ENCODE measurements at regions of chr9 and their contacts with region 1.

Region 1: GRCh38 chr9:133459476-133460404 is at the start of gene CACFD1:
- DNase-seq: peak; percentile 88 to 94
- ATAC-seq: peak; percentile 84 to 90 (median 85)
- H3K4me3 ChIP-seq: peak within 1 kb of the TSS; percentile 81
- H3K4me3 Mint-ChIP-seq: peak within 1 kb of the TSS; percentile 98
- H3K27ac ChIP-seq: peak within 1 kb of the TSS; percentile 90
- H3K27ac Mint-ChIP-seq: peak within 1 kb of the TSS; percentile 92 to 97
- H3K4me1 ChIP-seq: peaks cover 23% of the 10 kb centered on the region
- H3K4me1 Mint-ChIP-seq: peaks cover 0 to 14% of the 10 kb centered on the region in 2 donors
- H3K27me3 ChIP-seq: no peaks in the 10 kb centered on the region
- H3K27me3 Mint-ChIP-seq: no peaks in the 10 kb centered on the region
- CTCF ChIP-seq: no peak
- total RNA-seq, gene CACFD1: 4.5 to 8.3 (median 5.4) TPM

Region 2: GRCh38 chr9:133478851-133479711 is 19.3 kb after region 1 on chr9 and contains the start of gene SLC2A6:
- intact Hi-C with region 1: loop called (anchors 1 kb)
- DNase-seq: peak; percentile 81 to 90
- ATAC-seq: peak; percentile 96 to 98 (median 97)
- H3K4me3 ChIP-seq: peak within 1 kb of the TSS; percentile 47
- H3K4me3 Mint-ChIP-seq: peak within 1 kb of the TSS; percentile 75
- H3K27ac ChIP-seq: peak within 1 kb of the TSS; percentile 44
- H3K27ac Mint-ChIP-seq: peak within 1 kb of the TSS in 1 of 2 donors; percentile 63
- H3K4me1 ChIP-seq: peaks cover 51% of the 10 kb centered on the region
- H3K4me1 Mint-ChIP-seq: peaks cover 9 to 15% of the 10 kb centered on the region in 2 donors
- H3K27me3 ChIP-seq: no peaks in the 10 kb centered on the region
- H3K27me3 Mint-ChIP-seq: peaks cover 3 to 7% of the 10 kb centered on the region in 2 donors
- CTCF ChIP-seq: no peak
- total RNA-seq, gene SLC2A6: 5.0 to 20.1 (median 18.5) TPM

Measured in natural killer cell (primary cell).